ENCODE measurements at regions of chr12 and their contacts with region 1.

Region 1: DNA sequence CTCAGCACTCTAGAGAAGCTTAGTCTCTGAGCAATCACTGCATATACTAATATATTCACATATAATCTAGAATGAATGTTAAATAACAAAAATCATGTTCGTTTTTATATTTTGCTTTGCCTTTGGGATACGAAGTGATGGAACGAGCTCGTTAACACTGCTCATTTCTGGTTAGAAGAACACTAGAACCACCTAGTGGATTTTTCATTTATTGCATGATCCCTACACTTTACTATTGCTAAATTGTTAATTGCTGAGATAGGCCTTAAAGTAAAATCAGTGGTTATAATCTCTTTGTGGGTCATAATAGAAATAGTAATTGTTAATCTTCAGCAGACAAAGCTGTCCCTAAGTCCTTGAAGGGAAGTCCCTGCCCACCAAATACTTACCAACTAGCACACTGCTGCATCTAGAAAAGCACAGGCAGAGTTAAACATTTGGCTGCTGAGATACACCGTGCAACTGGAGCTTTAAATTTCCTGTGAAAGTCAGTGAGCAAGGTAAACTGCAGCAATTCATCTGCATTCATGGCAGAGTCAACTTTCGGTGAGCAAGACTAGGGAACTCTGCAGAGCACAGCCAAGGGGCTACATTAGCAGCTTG is 353.7 kb downstream of the APAF1 start:
- H3K4me3 ChIP-seq: no peak overlapping the region
- H3K27ac ChIP-seq: no peak overlapping the region
- H3K4me1 ChIP-seq: no peaks in the 10 kb centered on the region
- CTCF ChIP-seq: peak; percentile 22; the same call in 1 of the 2 replicates

Region 2: GRCh38 chr12:98418357-98419075 is 580.3 kb before region 1 on chr12:
- CTCF ChIA-PET with region 1: interaction called, 11 read pairs
- POLR2A ChIA-PET with region 1: no interaction called
- H3K4me3 ChIP-seq: no peak overlapping the region
- H3K27ac ChIP-seq: no peak overlapping the region
- H3K4me1 ChIP-seq: no peaks in the 10 kb centered on the region
- CTCF ChIP-seq: no peak

Region 3: DNA sequence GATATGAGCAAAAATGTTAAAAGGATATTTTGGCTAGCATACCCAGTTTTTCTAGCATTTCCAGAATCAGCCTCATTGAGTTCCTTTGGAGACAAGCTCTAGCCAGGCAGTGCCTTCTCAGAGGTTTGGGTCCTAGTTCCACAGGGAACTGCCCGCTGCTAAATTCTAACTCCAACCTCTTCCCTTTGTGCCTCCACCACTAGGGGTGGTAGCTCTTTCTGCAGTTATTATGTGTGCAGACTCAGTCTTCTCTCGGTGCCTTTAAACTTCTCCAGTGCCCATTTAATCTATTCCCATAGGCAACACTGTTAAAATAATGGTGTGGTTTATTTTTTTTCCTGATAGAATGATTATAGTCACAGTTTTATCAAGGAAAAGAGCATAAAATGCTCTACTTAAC is 426.8 kb before region 1 on chr12:
- CTCF ChIA-PET with region 1: interaction called, 12 read pairs
- POLR2A ChIA-PET with region 1: no interaction called
- H3K4me3 ChIP-seq: no peak overlapping the region
- H3K27ac ChIP-seq: no peak overlapping the region
- H3K4me1 ChIP-seq: no peaks in the 10 kb centered on the region
- CTCF ChIP-seq: no peak

Region 4: DNA sequence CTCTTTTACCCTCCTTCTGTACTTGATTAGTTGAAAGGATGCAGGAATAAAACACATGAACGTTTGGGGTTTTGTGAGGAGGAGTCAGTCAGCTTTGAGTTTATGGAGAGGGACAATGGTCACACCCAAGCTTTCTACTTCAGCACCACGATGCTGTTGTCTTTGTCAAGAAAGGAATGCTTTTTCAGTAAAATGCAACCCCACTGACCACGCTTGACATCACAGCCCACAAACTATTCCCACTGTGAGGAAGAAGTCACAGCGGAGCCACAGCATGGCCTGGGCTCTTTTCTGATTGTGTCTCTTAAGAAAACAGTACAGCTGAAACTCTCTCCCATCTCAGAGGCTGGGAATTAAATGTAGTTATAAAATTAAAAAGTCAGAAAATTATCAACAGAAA is 218.5 kb before region 1 on chr12:
- CTCF ChIA-PET with region 1: no interaction called
- POLR2A ChIA-PET with region 1: no interaction called
- H3K4me3 ChIP-seq: no peak overlapping the region
- H3K27ac ChIP-seq: no peak overlapping the region
- H3K4me1 ChIP-seq: no peaks in the 10 kb centered on the region
- CTCF ChIP-seq: no peak

Region 5: GRCh38 chr12:98955277-98955676 is 43.5 kb before region 1 on chr12:
- CTCF ChIA-PET with region 1: interaction called, 34 read pairs
- POLR2A ChIA-PET with region 1: no interaction called
- H3K4me3 ChIP-seq: no peak overlapping the region
- H3K27ac ChIP-seq: no peak overlapping the region
- H3K4me1 ChIP-seq: no peaks in the 10 kb centered on the region
- CTCF ChIP-seq: no peak

Region 6: GRCh38 chr12:99009654-99010296 is 11.0 kb after region 1 on chr12:
- CTCF ChIA-PET with region 1: interaction called, 16 read pairs
- POLR2A ChIA-PET with region 1: no interaction called
- H3K4me3 ChIP-seq: no peak overlapping the region
- H3K27ac ChIP-seq: no peak overlapping the region
- H3K4me1 ChIP-seq: no peaks in the 10 kb centered on the region
- CTCF ChIP-seq: no peak

Region 7: GRCh38 chr12:99087278-99087677 is 88.5 kb after region 1 on chr12:
- CTCF ChIA-PET with region 1: no interaction called
- POLR2A ChIA-PET with region 1: no interaction called
- H3K4me3 ChIP-seq: no peak overlapping the region
- H3K27ac ChIP-seq: no peak overlapping the region
- H3K4me1 ChIP-seq: 0 out of 2 replicates have a peak, but pooled peaks cover 4% of the 10 kb centered on the region
- CTCF ChIP-seq: no peak

Region 8: DNA sequence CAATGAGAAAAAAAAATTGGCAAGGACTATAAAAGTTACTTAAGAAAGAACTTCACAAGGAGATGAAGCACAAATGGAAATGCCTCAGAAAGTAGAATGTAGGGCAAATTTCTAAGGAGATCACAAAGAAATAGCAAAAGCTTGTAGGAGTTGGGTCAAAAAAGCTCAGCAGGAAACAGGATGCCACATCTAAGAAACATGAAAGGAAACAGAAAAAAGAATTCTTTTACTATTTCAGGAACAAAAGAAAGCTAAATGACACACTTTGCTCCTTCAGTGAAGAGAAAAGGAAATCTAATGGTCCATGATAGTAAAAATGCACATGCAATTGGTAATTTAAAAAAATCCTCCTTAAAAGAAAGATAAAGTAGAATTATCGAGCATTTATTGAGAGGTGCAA is 196.7 kb after region 1 on chr12:
- CTCF ChIA-PET with region 1: no interaction called
- POLR2A ChIA-PET with region 1: no interaction called
- H3K4me3 ChIP-seq: no peak overlapping the region
- H3K27ac ChIP-seq: no peak overlapping the region
- H3K4me1 ChIP-seq: no peaks in the 10 kb centered on the region
- CTCF ChIP-seq: no peak

Region 9: GRCh38 chr12:99212275-99212674 is 213.5 kb after region 1 on chr12:
- CTCF ChIA-PET with region 1: no interaction called
- POLR2A ChIA-PET with region 1: no interaction called
- H3K4me3 ChIP-seq: no peak overlapping the region
- H3K27ac ChIP-seq: no peak overlapping the region
- H3K4me1 ChIP-seq: no peaks in the 10 kb centered on the region
- CTCF ChIP-seq: no peak